B cell (primary cell): ENCODE measurements at regions of chr2 and their contacts with region 1.

Region 1: GRCh38 chr2:9618410-9618809 is 12.4 kb downstream of the YWHAQ start:
- DNase-seq: peak; percentile 24
- ATAC-seq: peak; percentile 60
- H3K4me3 ChIP-seq: no peak overlapping the region
- H3K4me3 Mint-ChIP-seq: peak overlapping the region; percentile 55
- H3K27ac ChIP-seq: peak overlapping the region in 1 of 2 donors; percentile 59
- H3K27ac Mint-ChIP-seq: no peak overlapping the region
- H3K4me1 ChIP-seq: peaks cover 10 to 27% of the 10 kb centered on the region in 2 donors
- H3K4me1 Mint-ChIP-seq: peaks cover 83% of the 10 kb centered on the region
- H3K27me3 ChIP-seq: no peaks in the 10 kb centered on the region
- H3K27me3 Mint-ChIP-seq: no peaks in the 10 kb centered on the region
- CTCF ChIP-seq: no peak

Region 2: DNA sequence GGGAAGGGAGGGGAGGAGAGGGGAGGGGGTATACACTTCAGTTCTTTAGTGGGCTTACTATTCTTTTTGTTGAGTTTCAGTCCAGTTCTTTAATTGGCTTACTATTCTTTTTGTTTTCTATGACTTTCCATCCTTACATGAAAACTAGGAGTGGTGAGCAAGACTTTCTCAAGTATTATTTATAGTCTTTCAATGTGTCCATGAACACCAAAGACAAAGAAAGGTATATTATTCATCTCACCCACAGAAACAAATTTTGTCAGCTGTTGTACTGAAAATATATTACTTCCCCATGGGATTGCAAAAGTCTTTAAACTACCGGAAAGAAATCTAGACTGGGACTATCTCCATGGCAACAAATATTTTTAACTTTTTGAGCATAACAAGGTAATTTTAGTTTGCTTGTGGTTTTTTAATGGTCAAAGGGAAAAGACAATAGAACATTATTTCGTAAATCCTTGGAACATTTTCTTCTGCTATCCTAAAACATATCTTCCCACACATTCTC is 80.4 kb before region 1 on chr2:
- CTCF ChIA-PET with region 1: no interaction called
- POLR2A ChIA-PET with region 1: no interaction called
- intact Hi-C with region 1: loop called (anchors 5 kb)
- DNase-seq: peak; percentile 38
- ATAC-seq: no peak
- H3K4me3 ChIP-seq: no peak overlapping the region
- H3K4me3 Mint-ChIP-seq: peak overlapping the region; percentile 59
- H3K27ac ChIP-seq: peak overlapping the region in 1 of 2 donors; percentile 67
- H3K27ac Mint-ChIP-seq: peak overlapping the region; percentile 59
- H3K4me1 ChIP-seq: peaks cover 43 to 64% of the 10 kb centered on the region in 2 donors
- H3K4me1 Mint-ChIP-seq: peaks cover 66% of the 10 kb centered on the region
- H3K27me3 ChIP-seq: no peaks in the 10 kb centered on the region
- H3K27me3 Mint-ChIP-seq: no peaks in the 10 kb centered on the region
- CTCF ChIP-seq: no peak

Region 3: DNA sequence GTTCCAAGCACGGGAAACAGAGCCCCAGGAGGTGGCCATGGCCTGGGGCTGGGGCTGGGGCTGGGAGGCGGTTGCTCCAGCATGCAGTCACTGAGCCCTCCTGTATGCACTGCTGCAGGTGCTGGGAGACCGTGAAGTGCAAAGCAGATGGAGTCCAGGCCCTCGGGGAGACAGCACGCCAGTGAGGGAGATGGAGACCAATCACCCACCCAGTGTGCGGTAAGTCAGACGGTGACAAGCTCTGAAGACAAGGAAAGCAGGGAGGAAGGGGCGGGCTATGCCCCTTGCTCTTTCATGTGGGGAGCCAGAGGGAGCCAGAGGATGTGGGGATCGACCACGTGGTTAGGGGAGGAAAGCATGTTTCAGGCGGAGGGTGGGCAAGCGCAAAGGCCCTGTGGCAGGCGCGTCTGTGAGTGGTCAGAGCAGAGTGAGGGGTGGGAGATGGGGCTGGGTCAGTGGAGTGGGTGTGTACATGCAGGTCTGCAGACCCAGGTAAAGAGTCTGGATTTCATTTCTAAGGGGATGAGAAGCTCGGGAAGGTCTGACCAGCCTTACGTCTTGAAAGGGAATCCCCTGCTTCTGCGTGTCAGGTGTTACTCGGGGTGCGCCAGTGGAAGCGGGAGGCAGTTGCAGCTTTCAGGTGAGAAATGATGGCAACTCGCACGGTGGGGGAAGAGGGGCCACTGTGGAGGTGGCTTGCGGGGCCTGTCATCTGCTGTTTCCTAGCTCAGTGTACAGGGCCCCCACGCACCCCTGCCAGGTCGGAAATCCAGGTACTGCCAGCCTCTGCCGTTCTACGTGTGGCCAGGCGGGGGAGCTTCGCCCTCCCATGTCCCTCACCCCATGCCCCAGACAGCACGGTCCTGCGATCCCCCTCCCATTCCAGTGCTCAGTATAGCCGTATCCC is 523.6 kb after region 1 on chr2:
- CTCF ChIA-PET with region 1: no interaction called
- POLR2A ChIA-PET with region 1: no interaction called
- intact Hi-C with region 1: no loop called
- DNase-seq: peak; percentile 53
- ATAC-seq: peak; percentile 88
- H3K4me3 ChIP-seq: no peak overlapping the region
- H3K4me3 Mint-ChIP-seq: no peak overlapping the region
- H3K27ac ChIP-seq: no peak overlapping the region
- H3K27ac Mint-ChIP-seq: no peak overlapping the region
- H3K4me1 ChIP-seq: no peaks in the 10 kb centered on the region
- H3K4me1 Mint-ChIP-seq: no peaks in the 10 kb centered on the region
- H3K27me3 ChIP-seq: no peaks in the 10 kb centered on the region
- H3K27me3 Mint-ChIP-seq: no peaks in the 10 kb centered on the region
- CTCF ChIP-seq: peak; percentile 37